Calu3 (cell line): ENCODE measurements at regions of chr13 and their contacts with region 1.

Region 1: GRCh38 chr13:20828539-20829364 is 55.0 kb upstream of the EEF1AKMT1 start:
- DNase-seq: peak; percentile 33
- H3K4me3 Mint-ChIP-seq: no peak overlapping the region
- H3K27ac Mint-ChIP-seq: no peak overlapping the region
- H3K4me1 Mint-ChIP-seq: no peaks in the 10 kb centered on the region
- H3K27me3 Mint-ChIP-seq: no peaks in the 10 kb centered on the region
- CTCF ChIP-seq: peak; percentile 40

Region 2: DNA sequence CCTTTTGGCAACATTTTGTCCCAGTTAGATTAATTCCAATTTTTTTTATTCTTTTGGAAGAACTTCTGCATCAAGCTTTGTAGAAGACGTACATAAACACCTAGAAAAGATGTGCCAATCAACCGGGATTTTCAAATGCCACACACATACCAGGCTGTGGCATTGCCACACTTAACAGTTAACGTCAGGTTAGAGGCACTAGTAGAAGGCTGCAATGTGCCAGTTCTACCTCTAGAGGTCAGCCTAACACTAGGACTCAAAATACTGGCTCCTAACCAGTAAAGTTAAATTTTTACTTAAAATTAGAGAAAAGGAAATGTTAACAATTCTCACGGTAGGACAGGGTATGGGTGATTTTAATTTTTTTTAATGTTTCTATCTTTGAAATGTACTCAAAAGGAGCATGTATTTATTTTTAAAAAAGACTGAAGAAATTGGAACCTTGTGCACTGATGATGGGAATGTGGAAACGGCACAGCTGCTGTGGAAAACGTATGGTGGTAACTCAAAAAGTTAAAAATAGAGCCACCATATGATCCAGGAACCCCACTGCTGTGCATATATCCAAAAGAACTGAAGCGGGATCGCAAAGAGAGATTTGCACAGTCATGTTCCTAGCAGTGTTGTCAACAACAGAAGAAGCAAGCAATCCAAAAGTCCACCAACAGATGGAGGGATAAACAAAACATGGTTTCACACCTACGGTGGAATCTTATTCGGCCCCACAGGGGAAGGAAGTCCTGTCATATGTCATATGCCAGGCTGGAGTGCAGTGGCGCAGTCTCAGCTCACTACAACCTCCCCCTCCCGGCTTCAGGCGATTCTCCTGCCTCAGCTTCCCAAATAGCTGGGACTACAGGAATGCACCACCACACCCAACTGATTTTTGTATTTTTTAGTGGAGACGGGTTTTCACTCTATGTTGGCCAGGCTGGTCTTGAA is 333.4 kb before region 1 on chr13:
- CTCF ChIA-PET with region 1: no interaction called
- intact Hi-C with region 1: loop called (anchors 1 kb)
- DNase-seq: peak; percentile 46
- H3K4me3 Mint-ChIP-seq: no peak overlapping the region
- H3K27ac Mint-ChIP-seq: peak overlapping the region; percentile 25
- H3K4me1 Mint-ChIP-seq: no peaks in the 10 kb centered on the region
- H3K27me3 Mint-ChIP-seq: no peaks in the 10 kb centered on the region
- CTCF ChIP-seq: peak; percentile 55